A673 (cell line): ENCODE measurements at regions of chr19 and their contacts with region 1.

Region 1: GRCh38 chr19:6393074-6393983 is at the start of gene GTF2F1:
- DNase-seq: peak; percentile 99
- H3K4me3 ChIP-seq: peak within 1 kb of the TSS; percentile 70
- H3K27ac ChIP-seq: peak within 1 kb of the TSS; percentile 93
- H3K4me1 ChIP-seq: peaks cover 14% of the 10 kb centered on the region
- H3K27me3 ChIP-seq: no peaks in the 10 kb centered on the region
- CTCF ChIP-seq: 0 out of 2 replicates have a peak, but pooled peaks have one; percentile 21
- total RNA-seq, gene GTF2F1: 100 and 106 TPM in 2 replicates

Region 2: GRCh38 chr19:6110360-6110977 is 282.9 kb before region 1 on chr19 and contains the start of gene RFX2:
- CTCF ChIA-PET with region 1: no interaction called
- POLR2A ChIA-PET with region 1: interaction called, 17 read pairs
- intact Hi-C with region 1: no loop called
- DNase-seq: peak; percentile 100
- H3K4me3 ChIP-seq: peak within 1 kb of the TSS; percentile 68
- H3K27ac ChIP-seq: peak within 1 kb of the TSS; percentile 8
- H3K4me1 ChIP-seq: peaks cover 5% of the 10 kb centered on the region
- H3K27me3 ChIP-seq: no peaks in the 10 kb centered on the region
- CTCF ChIP-seq: no peak
- total RNA-seq, gene RFX2: 11.7 and 11.8 TPM in 2 replicates